Endothelial cell of umbilical vein (primary cell): ENCODE measurements at regions of chr12 and their contacts with region 1.

Region 1: DNA sequence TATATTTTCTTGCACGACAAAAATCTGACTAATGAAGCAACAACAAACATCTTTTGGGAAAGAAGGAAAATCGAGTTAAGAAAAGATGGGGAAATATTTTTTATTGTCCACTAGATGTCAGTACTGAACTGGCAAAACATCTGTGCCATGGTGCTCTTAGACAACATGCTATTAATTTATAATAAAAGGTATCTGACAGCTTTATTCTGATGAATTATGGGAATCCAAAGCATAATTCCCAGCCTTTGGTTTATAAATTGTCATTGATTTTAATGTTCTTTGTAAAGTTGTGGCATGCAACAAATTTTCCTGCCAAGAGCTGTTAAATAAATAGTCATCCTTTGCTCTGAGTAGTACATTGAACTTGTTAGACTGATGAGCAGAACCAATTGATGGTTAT is 231.2 kb downstream of the ETNK1 start:
- DNase-seq: peak; percentile 42
- H3K4me3 ChIP-seq: no peak overlapping the region
- H3K27ac ChIP-seq: no peak overlapping the region
- H3K4me1 ChIP-seq: no peaks in the 10 kb centered on the region
- H3K27me3 ChIP-seq: peaks cover 0 to 1% of the 10 kb centered on the region in 2 experiments
- CTCF ChIP-seq: peak; percentile 13 to 14
- POLR2A ChIP-seq: no peak

Region 2: DNA sequence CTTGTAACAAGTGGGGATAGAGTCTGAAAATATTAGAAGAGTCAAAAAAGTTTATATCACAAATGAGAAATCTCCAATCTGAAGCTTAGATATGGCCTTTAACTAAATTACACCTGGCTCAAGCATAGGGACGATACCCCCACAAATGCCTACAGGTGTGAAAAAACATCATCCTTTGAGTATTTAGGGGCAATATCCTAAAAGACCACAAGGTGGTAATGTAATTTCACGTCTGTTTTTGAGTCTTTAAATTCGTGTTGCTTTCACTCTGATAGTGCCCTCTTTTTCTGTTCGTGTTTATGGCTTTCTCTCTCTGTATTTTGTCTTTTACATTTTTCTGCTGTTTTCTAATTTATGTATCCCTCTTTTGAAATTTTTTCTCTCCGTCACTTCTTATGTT is 146.9 kb before region 1 on chr12:
- CTCF ChIA-PET with region 1: no interaction called
- POLR2A ChIA-PET with region 1: no interaction called
- dilution Hi-C with region 1: no loop called
- intact Hi-C with region 1: no loop called
- DNase-seq: peak; percentile 12
- H3K4me3 ChIP-seq: no peak overlapping the region
- H3K27ac ChIP-seq: no peak overlapping the region
- H3K4me1 ChIP-seq: no peaks in the 10 kb centered on the region
- H3K27me3 ChIP-seq: peaks cover 0 to 4% of the 10 kb centered on the region in 2 experiments
- CTCF ChIP-seq: peak; percentile 9 to 20
- POLR2A ChIP-seq: no peak

Region 3: DNA sequence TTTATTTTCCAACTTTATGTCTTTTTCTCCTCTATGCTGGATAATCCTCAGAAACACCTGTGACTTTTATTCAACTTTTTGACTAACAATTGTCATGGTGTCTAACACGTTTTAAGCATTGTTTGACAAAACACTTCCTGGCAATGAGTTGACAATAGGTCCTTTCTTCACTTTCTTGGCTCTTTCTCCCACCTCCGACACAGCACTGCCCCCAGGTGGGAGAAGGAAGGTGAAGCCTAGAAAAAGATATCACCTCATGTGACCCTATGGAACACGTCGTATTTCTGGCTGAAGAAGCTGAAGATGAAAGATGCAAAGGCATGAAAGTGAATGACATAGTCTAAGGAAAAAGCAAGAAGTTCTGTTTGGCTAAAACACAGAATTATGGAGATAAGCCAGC is 198.8 kb after region 1 on chr12:
- CTCF ChIA-PET with region 1: interaction called, 14 read pairs
- POLR2A ChIA-PET with region 1: no interaction called
- dilution Hi-C with region 1: no loop called
- intact Hi-C with region 1: loop called (anchors 1 kb)
- DNase-seq: peak; percentile 4
- H3K4me3 ChIP-seq: no peak overlapping the region
- H3K27ac ChIP-seq: no peak overlapping the region
- H3K4me1 ChIP-seq: no peaks in the 10 kb centered on the region
- H3K27me3 ChIP-seq: no peaks in the 10 kb centered on the region
- CTCF ChIP-seq: peak; percentile 11 to 22
- POLR2A ChIP-seq: no peak

Region 4: DNA sequence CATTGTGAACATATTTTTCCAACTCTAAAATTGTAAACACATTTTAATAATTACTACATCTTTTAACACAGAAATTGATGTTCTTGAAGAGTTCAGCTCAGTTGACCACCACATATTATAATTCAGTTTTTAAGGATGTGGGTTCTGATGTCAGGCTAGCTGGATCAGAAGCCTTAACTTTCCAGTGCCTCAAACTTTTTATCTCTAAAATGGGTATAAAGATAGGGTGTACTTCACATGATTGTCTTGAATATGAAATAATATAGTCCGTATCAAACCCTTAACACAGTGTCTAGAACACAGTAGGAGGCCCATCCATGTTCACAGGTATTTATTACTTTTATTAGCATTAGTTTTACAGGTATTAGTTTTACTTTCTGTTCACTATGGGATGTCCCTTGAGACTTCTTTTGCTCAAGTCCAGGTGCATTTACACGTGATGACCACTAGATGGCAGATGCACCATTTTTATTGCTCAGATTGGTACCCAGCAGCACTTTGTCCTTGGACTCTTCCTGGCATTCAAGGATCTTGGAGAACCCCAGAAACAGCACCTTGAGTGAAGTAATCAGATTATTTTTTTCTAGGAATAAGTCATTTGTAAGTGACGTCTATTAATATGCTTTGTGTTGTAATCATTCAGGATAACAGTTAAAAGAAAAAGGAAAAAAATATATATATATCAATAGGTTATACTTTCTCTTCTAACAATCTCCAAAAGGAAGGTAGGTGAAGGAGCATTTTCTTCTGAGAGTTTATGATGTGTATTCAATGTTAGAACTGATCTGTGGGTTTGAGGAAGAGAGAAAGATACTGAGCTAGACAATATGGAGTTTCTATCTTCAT is 349.0 kb after region 1 on chr12:
- CTCF ChIA-PET with region 1: interaction called, 14 read pairs
- POLR2A ChIA-PET with region 1: no interaction called
- dilution Hi-C with region 1: no loop called
- intact Hi-C with region 1: loop called (anchors 1 kb)
- DNase-seq: peak; percentile 65
- H3K4me3 ChIP-seq: no peak overlapping the region
- H3K27ac ChIP-seq: no peak overlapping the region
- H3K4me1 ChIP-seq: no peaks in the 10 kb centered on the region
- H3K27me3 ChIP-seq: peaks cover 0 to 3% of the 10 kb centered on the region in 2 experiments
- CTCF ChIP-seq: peak; percentile 67 to 74
- POLR2A ChIP-seq: no peak

Region 5: DNA sequence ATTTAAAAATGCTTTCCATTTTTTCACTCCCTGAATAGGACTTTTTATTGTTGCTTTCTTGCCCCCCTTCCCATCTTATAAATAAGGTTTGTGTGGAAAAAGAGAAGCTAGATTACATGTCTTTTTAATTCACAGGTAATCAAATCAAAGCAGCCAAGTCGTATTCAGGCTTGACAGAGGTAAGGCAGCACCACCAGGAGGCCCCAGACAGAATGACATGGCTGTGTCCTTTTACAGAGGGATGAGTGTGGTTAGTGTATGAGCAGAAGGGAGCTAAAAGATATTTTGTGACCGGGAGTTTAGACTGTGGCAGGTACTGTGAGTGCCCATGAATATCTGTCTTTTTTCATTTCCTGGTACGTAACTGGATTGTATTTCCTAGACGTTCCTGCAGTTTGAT is 364.9 kb after region 1 on chr12:
- CTCF ChIA-PET with region 1: interaction called, 21 read pairs
- POLR2A ChIA-PET with region 1: no interaction called
- dilution Hi-C with region 1: no loop called
- intact Hi-C with region 1: no loop called
- DNase-seq: no peak
- H3K4me3 ChIP-seq: no peak overlapping the region
- H3K27ac ChIP-seq: no peak overlapping the region
- H3K4me1 ChIP-seq: no peaks in the 10 kb centered on the region
- H3K27me3 ChIP-seq: no peaks in the 10 kb centered on the region
- CTCF ChIP-seq: peak; percentile 10 to 18
- POLR2A ChIP-seq: no peak

Region 6: DNA sequence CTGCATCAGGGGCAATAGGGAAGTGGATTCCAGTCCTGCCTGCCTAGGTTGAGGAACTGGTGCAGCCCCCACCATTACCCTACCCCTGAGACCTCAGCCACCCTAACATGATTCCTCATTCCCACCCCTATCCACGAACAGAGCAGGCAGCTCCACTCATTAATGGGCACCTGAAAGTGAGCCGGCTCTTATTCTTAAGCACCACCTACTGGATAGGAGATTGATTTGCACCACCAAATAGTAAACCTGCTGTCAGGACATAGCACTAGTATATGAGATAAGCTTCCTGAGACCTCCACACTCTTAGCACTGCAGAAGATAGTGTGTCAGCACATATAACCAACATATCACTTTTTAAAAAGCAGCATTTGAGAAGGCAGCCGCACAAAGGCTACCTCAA is 520.1 kb after region 1 on chr12:
- CTCF ChIA-PET with region 1: interaction called, 10 read pairs
- POLR2A ChIA-PET with region 1: no interaction called
- dilution Hi-C with region 1: no loop called
- intact Hi-C with region 1: no loop called
- DNase-seq: peak; percentile 12
- H3K4me3 ChIP-seq: no peak overlapping the region
- H3K27ac ChIP-seq: no peak overlapping the region
- H3K4me1 ChIP-seq: no peaks in the 10 kb centered on the region
- H3K27me3 ChIP-seq: no peaks in the 10 kb centered on the region
- CTCF ChIP-seq: peak; percentile 4 to 16
- POLR2A ChIP-seq: no peak

Region 7: DNA sequence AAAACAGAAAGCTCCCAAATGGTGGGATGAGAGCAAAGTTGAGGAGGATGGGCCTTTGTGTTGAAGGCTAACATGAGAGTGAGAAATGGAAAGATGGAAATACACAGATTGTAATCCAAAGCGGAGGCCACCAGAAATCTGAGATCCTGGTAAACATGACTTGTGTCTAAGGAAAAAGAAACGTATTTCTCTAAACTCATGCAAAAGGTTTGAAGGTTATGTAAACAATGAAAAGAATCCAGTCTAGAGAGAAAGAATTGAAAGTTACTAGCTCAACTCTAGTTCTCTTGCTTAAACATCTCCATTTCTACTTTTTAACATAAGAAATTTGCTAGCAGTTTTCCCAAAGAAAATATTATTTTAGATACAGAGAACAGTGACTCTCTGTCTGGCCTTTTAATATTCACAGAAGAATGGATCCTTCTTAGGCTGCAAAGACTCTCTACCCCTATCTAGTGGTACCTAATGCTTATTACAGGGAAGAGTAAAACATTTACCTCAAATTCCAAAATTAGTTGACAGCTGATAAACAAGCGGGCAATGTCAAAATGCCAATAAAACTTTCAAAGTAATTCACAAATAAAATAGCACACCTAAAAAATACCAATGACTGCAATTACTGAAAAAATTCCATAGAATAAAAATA is 1169.1 kb after region 1 on chr12:
- CTCF ChIA-PET with region 1: interaction called, 10 read pairs
- POLR2A ChIA-PET with region 1: no interaction called
- dilution Hi-C with region 1: no loop called
- intact Hi-C with region 1: no loop called
- DNase-seq: no peak
- H3K4me3 ChIP-seq: no peak overlapping the region
- H3K27ac ChIP-seq: no peak overlapping the region
- H3K4me1 ChIP-seq: no peaks in the 10 kb centered on the region
- H3K27me3 ChIP-seq: peaks cover 7 to 12% of the 10 kb centered on the region in 2 experiments
- CTCF ChIP-seq: peak; percentile 21 to 40
- POLR2A ChIP-seq: no peak

Region 8: DNA sequence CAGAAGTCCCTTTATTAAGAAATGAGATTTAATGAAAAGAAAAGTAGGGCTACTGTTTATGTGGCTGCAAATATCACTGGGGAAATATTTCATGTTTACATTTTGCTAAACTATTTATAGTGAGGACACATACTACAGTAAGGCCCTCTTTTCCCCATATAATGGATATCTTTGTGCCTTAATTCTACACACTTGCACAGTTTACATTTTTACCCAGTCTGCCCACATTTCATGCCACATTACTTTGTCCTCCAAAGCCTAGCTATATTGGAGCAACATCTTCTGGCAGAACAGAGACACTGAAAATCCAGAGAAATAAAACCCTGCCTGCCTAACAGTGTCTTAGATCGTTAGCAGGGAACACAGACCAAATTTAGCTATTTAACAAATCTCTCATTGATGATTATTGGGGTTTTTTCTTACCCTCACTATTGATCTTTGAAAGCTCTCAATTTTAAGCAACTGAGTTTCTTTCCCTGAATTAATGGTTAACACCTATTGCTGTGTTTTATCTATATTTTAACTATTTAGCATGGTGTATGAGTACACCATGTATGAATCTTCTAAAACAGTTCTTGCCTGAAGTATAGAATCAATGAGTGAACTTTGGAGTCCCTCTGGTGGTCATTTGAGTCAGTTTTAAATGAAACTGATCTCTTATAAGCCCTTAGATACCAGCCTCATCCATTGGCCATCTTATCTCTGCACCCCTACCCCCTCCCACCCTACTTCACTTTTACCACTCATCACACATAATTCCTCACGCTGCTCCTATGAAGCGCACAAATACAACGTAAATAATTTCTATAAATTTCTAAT is 1922.5 kb after region 1 on chr12:
- CTCF ChIA-PET with region 1: interaction called, 15 read pairs
- POLR2A ChIA-PET with region 1: no interaction called
- dilution Hi-C with region 1: no loop called
- intact Hi-C with region 1: no loop called
- DNase-seq: peak; percentile 39
- H3K4me3 ChIP-seq: no peak overlapping the region
- H3K27ac ChIP-seq: no peak overlapping the region
- H3K4me1 ChIP-seq: no peaks in the 10 kb centered on the region
- H3K27me3 ChIP-seq: peaks cover 0 to 4% of the 10 kb centered on the region in 2 experiments
- CTCF ChIP-seq: peak; percentile 17 to 26
- POLR2A ChIP-seq: no peak